AG04449 (cell line): ENCODE measurements at regions of chr6 and their contacts with region 1.

Region 1: DNA sequence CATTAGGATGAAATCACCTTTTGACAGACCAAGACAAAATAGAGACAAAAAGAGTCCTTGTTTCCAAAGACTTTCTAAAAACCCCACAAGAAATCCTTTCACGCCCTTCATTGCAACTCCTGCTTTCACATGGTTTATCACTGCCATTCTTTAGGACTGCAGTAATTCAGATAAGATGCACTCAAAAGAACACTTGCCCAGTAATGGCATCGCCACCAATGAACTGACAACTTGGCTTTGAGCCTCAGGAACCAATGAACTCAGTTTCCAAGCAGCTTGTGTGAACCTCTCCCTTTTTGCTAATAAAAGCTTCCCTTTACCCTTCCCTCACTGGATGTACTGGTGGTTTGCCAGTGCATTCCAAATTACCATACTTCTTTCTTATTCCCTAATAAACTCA is 21.8 kb downstream of the OSTM1 start:
- DNase-seq: no peak
- H3K4me3 ChIP-seq: no peak overlapping the region
- CTCF ChIP-seq: no peak

Region 2: DNA sequence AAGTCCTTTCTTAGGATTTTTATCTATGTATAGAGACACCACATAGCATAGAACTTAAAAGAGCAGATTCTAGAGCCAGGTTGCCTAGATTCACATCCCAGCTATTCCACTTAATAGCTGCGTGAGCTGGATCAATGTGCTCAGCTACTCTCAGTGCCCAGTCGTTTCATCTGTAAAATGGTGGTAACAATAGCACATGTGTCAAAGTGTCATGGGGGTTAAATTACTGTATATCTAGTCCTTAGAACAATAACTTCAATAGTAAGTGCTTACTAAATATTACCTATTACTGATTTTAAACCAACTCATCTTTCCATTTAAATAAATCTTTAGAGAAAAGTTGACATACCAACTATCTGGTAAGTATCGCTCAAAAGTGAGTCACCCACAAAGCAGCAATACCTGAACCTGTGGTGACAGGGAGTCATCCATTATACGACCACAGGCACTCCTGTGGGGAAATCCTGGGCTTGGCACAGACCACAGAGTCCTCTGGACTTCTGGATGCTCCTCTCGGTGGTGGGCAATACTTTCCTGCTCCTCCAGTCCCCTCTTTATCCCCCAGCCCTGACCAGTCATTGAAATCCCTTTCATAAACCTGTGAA is 748.2 kb before region 1 on chr6:
- CTCF ChIA-PET with region 1: no interaction called
- POLR2A ChIA-PET with region 1: no interaction called
- DNase-seq: no peak
- H3K4me3 ChIP-seq: no peak overlapping the region
- CTCF ChIP-seq: no peak

Region 3: DNA sequence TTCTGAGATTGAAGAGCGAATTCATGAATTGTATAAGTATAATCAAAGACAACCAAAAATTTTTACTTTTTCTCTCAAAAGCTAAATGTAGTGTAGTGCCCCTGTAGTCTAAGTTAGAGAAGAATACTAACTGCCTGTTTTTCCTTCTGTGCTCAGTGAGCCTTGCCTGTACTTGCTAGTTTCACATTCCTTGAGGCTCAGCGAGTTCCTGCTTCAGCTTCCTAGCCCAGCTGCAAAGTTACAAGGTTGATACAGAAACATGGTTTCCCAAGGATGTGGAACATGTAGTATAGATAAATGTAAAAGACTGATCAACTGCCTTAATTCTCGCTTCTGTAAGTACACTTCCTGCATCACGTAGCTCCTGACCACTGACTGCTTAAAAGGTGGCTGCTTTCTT is 61.6 kb before region 1 on chr6:
- CTCF ChIA-PET with region 1: interaction called, 14 read pairs
- POLR2A ChIA-PET with region 1: no interaction called
- DNase-seq: no peak
- H3K4me3 ChIP-seq: no peak overlapping the region
- CTCF ChIP-seq: no peak

Region 4: GRCh38 chr6:108039681-108040080 is 13.0 kb before region 1 on chr6:
- CTCF ChIA-PET with region 1: interaction called, 27 read pairs
- POLR2A ChIA-PET with region 1: no interaction called
- DNase-seq: no peak
- H3K4me3 ChIP-seq: no peak overlapping the region
- CTCF ChIP-seq: no peak

Region 5: GRCh38 chr6:108080010-108080780 is 27.5 kb after region 1 on chr6:
- CTCF ChIA-PET with region 1: no interaction called
- POLR2A ChIA-PET with region 1: no interaction called
- DNase-seq: no peak
- H3K4me3 ChIP-seq: no peak overlapping the region
- CTCF ChIP-seq: no peak

Region 6: GRCh38 chr6:108286366-108286765 is 233.7 kb after region 1 on chr6:
- CTCF ChIA-PET with region 1: no interaction called
- POLR2A ChIA-PET with region 1: no interaction called
- DNase-seq: no peak
- H3K4me3 ChIP-seq: no peak overlapping the region
- CTCF ChIP-seq: no peak